ENCODE measurements at regions of chr1 and their contacts with region 1.

Region 1: DNA sequence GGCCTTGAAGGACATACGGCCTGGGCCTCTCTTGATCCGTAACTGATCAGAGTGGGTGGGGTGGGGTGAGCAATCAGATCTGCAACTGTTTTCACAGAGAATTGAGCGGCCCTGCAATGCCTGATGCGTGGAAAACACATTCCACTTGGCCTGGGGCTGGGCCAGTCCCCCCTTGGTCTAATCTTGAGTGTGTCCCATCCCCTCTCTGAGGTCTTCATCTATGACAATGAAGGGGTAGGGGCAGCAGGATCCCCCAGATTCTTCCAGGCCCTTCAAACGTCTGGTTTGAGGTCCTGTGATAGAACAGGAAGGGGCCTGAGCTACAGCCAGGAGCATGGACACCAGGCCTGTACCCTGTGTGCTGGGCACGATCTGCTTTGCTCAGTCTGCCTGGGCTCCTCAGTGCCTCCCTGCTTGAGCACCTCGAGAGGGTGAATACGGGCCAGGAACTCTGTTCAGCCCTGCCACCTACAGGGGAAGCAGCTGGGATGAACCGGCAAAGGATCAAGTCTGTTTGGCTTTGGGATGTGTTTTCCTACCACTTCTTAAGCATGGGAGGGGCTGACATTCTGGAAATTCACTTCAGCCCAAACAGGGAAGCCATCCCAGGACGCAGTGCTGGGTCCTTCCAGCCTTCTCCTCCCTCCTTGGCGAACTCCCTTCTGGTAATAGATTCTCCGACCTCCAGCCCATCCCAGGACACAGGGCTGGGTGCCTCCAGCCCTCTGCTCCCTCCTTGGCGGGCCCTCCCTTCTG is 56.0 kb upstream of the SELENON start:
- DNase-seq: peak; percentile 73 to 86
- ATAC-seq: peak; percentile 86 to 88
- H3K4me3 ChIP-seq: no peak overlapping the region
- H3K27ac ChIP-seq: peak overlapping the region; percentile 90 to 95 (median 94)
- H3K4me1 ChIP-seq: peaks cover 31 to 32% of the 10 kb centered on the region in 2 donors
- H3K27me3 ChIP-seq: no peaks in the 10 kb centered on the region
- CTCF ChIP-seq: peak; percentile 42 to 65 (median 55)
- POLR2A ChIP-seq: no peak

Region 2: GRCh38 chr1:25608488-25609178 is 135.4 kb before region 1 on chr1:
- in situ Hi-C with region 1: loop called in 2 of 4 experiments (anchors 5 to 25 kb)
- intact Hi-C with region 1: loop called (anchors 1 kb)
- DNase-seq: peak; percentile 81 to 87
- ATAC-seq: peak; percentile 98 to 99
- H3K4me3 ChIP-seq: peak overlapping the region; percentile 36 to 55 (median 44)
- H3K27ac ChIP-seq: peak overlapping the region; percentile 49 to 74 (median 64)
- H3K4me1 ChIP-seq: no peaks in the 10 kb centered on the region
- H3K27me3 ChIP-seq: no peaks in the 10 kb centered on the region
- CTCF ChIP-seq: peak; percentile 38 to 88 (median 84)
- POLR2A ChIP-seq: peak in 1 of 2 donors; percentile 12

Region 3: GRCh38 chr1:26053718-26054560 is 309.9 kb after region 1 on chr1:
- in situ Hi-C with region 1: no loop called
- intact Hi-C with region 1: no loop called
- DNase-seq: no peak
- ATAC-seq: no peak
- H3K4me3 ChIP-seq: no peak overlapping the region
- H3K27ac ChIP-seq: peak overlapping the region; percentile 88 to 96 (median 94)
- H3K4me1 ChIP-seq: no peaks in the 10 kb centered on the region
- H3K27me3 ChIP-seq: no peaks in the 10 kb centered on the region
- CTCF ChIP-seq: no peak
- POLR2A ChIP-seq: peak; percentile 18 to 66

Measured in gastrocnemius medialis (tissue), 4 donors.